HCT116 (cell line): ENCODE measurements at regions of chr16 and their contacts with region 1.

Region 1: DNA sequence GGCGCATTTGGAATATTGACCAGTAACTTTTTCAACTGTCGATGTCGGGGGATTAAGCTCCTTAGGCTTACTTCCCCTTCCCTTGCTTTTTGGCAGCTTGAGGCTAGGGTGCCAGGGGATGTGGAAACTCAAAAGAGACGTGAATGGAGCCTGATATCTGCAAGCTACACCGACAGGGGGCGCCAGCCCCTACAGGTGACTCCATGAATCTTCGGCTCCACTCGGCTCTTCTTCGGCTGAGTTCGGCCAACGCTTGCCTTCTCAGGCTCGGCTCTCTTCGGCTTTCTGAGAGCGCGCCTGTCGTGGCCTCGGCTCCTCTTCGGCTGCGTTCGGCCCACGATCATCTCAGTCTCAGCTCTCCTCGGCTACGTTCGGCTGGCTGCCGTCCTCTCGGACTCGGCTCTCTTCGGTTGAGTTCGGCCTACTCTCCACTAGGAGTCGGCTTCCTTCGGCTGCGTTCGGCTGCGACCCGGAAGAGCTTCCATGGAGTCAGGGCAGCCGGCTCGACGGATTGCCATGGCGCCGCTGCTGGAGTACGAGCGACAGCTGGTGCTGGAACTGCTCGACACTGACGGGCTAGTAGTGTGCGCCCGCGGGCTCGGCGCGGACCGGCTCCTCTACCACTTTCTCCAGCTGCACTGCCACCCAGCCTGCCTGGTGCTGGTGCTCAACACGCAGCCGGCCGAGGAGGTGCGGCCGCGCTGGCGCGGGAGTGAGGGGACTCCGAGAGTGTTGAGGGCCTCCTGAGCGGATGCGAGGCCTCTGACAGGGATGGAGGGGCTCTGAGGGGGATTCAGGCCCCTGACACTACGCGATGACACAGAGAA is at the start of gene ERCC4:
- DNase-seq: peak; percentile 98
- ATAC-seq: peak; percentile 98
- H3K4me3 ChIP-seq: peak within 1 kb of the TSS; percentile 91 to 98
- H3K27ac ChIP-seq: peak within 1 kb of the TSS; percentile 65
- H3K4me1 ChIP-seq: peaks cover 7 to 15% of the 10 kb centered on the region in 2 experiments
- H3K27me3 ChIP-seq: no peaks in the 10 kb centered on the region
- CTCF ChIP-seq: peak; percentile 80 to 96 (median 84)
- POLR2A ChIP-seq: peak; percentile 39
- RAD21 ChIP-seq: peak; percentile 60
- total RNA-seq, gene ERCC4: 10.4 TPM

Region 2: GRCh38 chr16:13866073-13866472 is 53.8 kb before region 1 on chr16:
- CTCF ChIA-PET with region 1: interaction called, 4 read pairs
- POLR2A ChIA-PET with region 1: no interaction called
- RAD21 ChIA-PET with region 1: no interaction called
- intact Hi-C with region 1: loop called (anchors 1 kb)
- DNase-seq: peak; percentile 72
- ATAC-seq: peak; percentile 100
- H3K4me3 ChIP-seq: no peak overlapping the region
- H3K27ac ChIP-seq: no peak overlapping the region
- H3K4me1 ChIP-seq: no peaks in the 10 kb centered on the region
- H3K27me3 ChIP-seq: no peaks in the 10 kb centered on the region
- CTCF ChIP-seq: peak; percentile 58 to 93 (median 83); a peak in 5 of 6 replicates
- POLR2A ChIP-seq: no peak
- RAD21 ChIP-seq: peak; percentile 69

Region 3: GRCh38 chr16:13906168-13907089 is 13.5 kb before region 1 on chr16:
- CTCF ChIA-PET with region 1: interaction called, 18 read pairs
- POLR2A ChIA-PET with region 1: no interaction called
- RAD21 ChIA-PET with region 1: interaction called in 1 of 2 experiments, 3 read pairs
- intact Hi-C with region 1: no loop called
- DNase-seq: no peak
- ATAC-seq: 0 out of 2 replicates have a peak, but pooled peaks have one; percentile 20
- H3K4me3 ChIP-seq: no peak overlapping the region
- H3K27ac ChIP-seq: no peak overlapping the region
- H3K4me1 ChIP-seq: no peaks in the 10 kb centered on the region
- H3K27me3 ChIP-seq: no peaks in the 10 kb centered on the region
- CTCF ChIP-seq: no peak
- POLR2A ChIP-seq: no peak
- RAD21 ChIP-seq: no peak

Region 4: DNA sequence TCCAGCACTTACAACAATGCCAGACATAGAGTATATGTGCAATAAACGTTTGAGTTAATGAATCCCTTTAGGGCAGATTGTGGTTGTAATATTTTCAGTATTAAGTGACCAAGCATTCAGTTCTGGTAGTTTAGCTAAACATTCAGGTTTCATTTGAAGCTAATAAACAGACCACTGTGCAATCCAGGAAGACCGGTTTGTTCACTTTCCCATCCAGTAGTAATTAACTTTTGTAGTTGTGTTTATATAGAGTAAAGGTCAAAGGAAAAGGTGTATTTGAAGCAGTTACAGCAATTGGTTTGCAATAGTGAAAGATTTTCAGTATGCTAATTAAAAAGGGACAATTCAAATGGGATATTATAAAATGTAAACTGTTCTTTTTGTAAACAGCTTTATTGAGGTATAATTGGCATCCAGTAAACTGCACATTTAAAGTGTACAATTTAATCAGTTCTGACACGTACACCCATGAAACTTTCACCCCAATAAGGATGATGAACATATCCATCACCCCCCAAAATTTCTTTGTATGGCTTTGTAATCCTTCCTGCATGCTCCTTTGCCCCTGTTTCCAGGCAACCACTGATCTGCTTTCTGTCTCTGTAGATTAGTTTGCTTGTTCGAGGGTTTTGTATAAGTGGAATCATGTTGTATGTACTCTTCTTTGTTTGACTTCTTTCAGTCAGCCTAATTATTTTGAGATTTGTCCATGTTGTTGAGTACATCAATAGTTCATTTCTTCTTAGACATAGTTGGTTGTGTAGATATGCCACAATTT is 177.5 kb after region 1 on chr16:
- CTCF ChIA-PET with region 1: interaction called, 4 read pairs
- POLR2A ChIA-PET with region 1: interaction called, 3 read pairs
- RAD21 ChIA-PET with region 1: interaction called in 1 of 2 experiments, 3 read pairs
- intact Hi-C with region 1: loop called (anchors 10 kb)
- DNase-seq: peak; percentile 76
- ATAC-seq: peak; percentile 56
- H3K4me3 ChIP-seq: peak overlapping the region; percentile 5 to 49; a peak in 3 of 4 replicates
- H3K27ac ChIP-seq: peak overlapping the region; percentile 79
- H3K4me1 ChIP-seq: peaks cover 64 to 73% of the 10 kb centered on the region in 2 experiments
- H3K27me3 ChIP-seq: no peaks in the 10 kb centered on the region
- CTCF ChIP-seq: no peak
- POLR2A ChIP-seq: no peak
- RAD21 ChIP-seq: 0 out of 2 replicates have a peak, but pooled peaks have one; percentile 18

Region 5: GRCh38 chr16:14285513-14286385 is 365.9 kb after region 1 on chr16:
- CTCF ChIA-PET with region 1: interaction called, 43 read pairs
- POLR2A ChIA-PET with region 1: interaction called, 8 read pairs
- RAD21 ChIA-PET with region 1: interaction called, 7 to 8 read pairs
- intact Hi-C with region 1: loop called (anchors 1 kb)
- DNase-seq: peak; percentile 82
- ATAC-seq: peak; percentile 90
- H3K4me3 ChIP-seq: peak overlapping the region; percentile 64 to 66
- H3K27ac ChIP-seq: peak overlapping the region; percentile 66
- H3K4me1 ChIP-seq: peaks cover 3 to 9% of the 10 kb centered on the region in 2 experiments; a peak in 2 of 4 replicates
- H3K27me3 ChIP-seq: no peaks in the 10 kb centered on the region
- CTCF ChIP-seq: no peak; a peak in 1 of 6 replicates
- POLR2A ChIP-seq: no peak
- RAD21 ChIP-seq: no peak; the same call in 1 of the 2 replicates